GM13977 (cell line): ENCODE measurements at regions of chr1 and their contacts with region 1.

Region 1: GRCh38 chr1:160428655-160429054 is 28.3 kb downstream of the VANGL2 start:
- DNase-seq: peak; percentile 46
- CTCF ChIP-seq: peak; percentile 66

Region 2: DNA sequence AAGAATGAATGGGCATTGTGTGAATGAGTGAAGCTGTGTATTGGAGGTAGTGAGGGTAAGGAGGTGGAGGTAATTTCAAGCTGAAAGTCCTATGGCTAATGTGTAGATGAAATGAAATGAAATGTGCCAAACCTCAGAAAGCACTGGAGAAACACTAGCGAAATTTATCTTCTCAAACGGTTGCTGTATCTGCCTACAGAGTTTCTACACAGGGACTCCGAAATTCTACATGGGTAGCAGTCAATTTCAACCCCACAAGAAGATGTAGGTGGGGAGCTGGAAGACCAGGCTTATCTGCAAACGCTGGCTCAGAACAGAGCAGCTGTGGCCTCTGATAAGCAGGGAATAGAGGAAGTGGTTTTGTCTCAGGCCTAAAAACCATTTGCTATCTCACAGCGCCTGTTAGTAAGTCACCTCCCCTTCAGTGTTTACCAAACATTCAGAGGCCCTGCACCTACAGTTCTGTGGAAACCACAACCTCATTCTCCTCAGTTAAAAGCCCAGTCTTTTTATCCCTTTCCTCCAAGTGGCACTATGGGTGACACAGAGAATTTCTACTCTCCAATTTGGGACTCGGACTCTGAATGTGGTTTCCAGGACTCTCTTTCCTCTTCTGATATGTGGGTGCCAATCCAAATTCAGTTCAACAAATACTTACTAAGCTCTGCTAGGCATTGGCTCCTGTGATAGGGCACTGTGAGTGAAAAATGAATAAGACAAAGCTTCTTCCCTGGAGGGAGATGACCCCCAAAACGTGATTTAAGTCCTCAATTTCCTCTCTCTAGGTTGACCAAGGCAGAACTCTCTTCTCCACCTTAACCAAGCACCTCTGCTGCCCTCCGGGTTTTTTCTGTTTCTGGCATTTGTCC is 111.6 kb after region 1 on chr1:
- in situ Hi-C with region 1: loop called (anchors 25 kb)
- DNase-seq: peak; percentile 72
- CTCF ChIP-seq: no peak

Region 3: GRCh38 chr1:160607011-160607671 is 178.5 kb after region 1 on chr1:
- in situ Hi-C with region 1: loop called (anchors 5 kb)
- DNase-seq: peak; percentile 44
- CTCF ChIP-seq: peak; percentile 67